ENCODE measurements at regions of chr3 and their contacts with region 1.

Region 1: GRCh38 chr3:160956806-160957205 is 148.3 kb downstream of the B3GALNT1 start:
- DNase-seq: peak; percentile 50
- H3K4me3 ChIP-seq: no peak overlapping the region
- H3K27ac ChIP-seq: no peak overlapping the region
- H3K4me1 ChIP-seq: no peaks in the 10 kb centered on the region
- H3K27me3 ChIP-seq: no peaks in the 10 kb centered on the region
- CTCF ChIP-seq: peak; percentile 25 to 35
- POLR2A ChIP-seq: no peak

Region 2: DNA sequence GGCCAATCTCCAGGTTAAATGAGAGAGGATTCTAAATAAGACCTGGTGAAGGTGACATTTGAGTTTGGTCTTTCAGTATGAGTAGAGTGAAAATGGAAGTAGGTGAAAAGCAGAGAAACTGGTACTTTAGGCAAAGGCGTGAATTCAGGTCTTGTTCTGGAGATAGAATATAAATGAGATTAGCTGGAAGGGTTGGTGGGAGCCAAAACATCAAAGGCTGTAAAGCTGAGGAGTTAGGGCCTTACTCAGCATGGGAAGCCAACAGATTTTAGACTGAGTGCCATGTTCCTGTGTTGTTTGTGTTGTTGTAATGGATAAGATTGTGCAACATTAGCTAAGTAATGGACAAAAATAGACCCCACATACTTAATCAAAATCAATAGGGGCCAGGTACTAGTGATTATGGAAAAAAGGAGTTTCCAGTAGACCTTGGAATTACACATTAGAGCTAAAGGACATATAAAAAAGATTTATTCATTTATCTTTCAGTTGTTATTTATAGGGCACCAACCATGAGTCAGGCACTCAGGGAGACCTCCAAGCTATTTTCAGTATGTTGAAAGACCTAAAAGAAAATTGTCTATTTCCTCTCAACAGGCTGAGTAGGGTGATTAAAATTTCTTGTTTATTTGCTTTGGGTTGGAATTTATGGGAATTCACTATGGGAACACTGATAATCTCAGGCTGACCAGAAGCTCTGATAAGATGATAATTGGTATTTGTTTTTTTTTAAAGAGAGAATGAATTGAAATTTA is 259.0 kb before region 1 on chr3:
- CTCF ChIA-PET with region 1: no interaction called
- POLR2A ChIA-PET with region 1: no interaction called
- dilution Hi-C with region 1: no loop called
- intact Hi-C with region 1: no loop called
- DNase-seq: peak; percentile 63
- H3K4me3 ChIP-seq: no peak overlapping the region
- H3K27ac ChIP-seq: no peak overlapping the region
- H3K4me1 ChIP-seq: peaks cover 13% of the 10 kb centered on the region
- H3K27me3 ChIP-seq: no peaks in the 10 kb centered on the region
- CTCF ChIP-seq: no peak
- POLR2A ChIP-seq: no peak

Region 3: DNA sequence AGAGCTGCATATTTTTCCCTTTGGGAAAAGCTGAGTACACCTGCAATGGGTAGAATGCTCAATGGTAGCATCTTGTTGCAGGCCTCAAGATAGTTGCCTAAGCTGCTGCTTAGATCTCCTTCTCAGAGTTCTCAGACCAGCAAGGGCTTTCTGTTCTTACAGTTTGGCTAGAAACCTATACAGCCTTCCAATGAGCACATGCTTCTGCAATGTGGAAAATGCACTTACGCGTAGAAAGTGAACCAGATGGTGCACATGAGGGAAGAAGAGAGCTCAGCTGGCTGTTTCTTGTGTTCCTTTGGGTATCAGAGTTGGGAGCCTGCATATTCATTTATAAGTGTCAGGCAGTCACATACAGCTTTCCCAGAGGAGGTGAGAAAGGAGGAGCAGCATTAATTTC is 12.0 kb after region 1 on chr3:
- CTCF ChIA-PET with region 1: interaction called, 16 read pairs
- POLR2A ChIA-PET with region 1: no interaction called
- dilution Hi-C with region 1: no loop called
- intact Hi-C with region 1: no loop called
- DNase-seq: no peak
- H3K4me3 ChIP-seq: no peak overlapping the region
- H3K27ac ChIP-seq: no peak overlapping the region
- H3K4me1 ChIP-seq: peaks cover 10% of the 10 kb centered on the region
- H3K27me3 ChIP-seq: no peaks in the 10 kb centered on the region
- CTCF ChIP-seq: no peak
- POLR2A ChIP-seq: no peak

Region 4: DNA sequence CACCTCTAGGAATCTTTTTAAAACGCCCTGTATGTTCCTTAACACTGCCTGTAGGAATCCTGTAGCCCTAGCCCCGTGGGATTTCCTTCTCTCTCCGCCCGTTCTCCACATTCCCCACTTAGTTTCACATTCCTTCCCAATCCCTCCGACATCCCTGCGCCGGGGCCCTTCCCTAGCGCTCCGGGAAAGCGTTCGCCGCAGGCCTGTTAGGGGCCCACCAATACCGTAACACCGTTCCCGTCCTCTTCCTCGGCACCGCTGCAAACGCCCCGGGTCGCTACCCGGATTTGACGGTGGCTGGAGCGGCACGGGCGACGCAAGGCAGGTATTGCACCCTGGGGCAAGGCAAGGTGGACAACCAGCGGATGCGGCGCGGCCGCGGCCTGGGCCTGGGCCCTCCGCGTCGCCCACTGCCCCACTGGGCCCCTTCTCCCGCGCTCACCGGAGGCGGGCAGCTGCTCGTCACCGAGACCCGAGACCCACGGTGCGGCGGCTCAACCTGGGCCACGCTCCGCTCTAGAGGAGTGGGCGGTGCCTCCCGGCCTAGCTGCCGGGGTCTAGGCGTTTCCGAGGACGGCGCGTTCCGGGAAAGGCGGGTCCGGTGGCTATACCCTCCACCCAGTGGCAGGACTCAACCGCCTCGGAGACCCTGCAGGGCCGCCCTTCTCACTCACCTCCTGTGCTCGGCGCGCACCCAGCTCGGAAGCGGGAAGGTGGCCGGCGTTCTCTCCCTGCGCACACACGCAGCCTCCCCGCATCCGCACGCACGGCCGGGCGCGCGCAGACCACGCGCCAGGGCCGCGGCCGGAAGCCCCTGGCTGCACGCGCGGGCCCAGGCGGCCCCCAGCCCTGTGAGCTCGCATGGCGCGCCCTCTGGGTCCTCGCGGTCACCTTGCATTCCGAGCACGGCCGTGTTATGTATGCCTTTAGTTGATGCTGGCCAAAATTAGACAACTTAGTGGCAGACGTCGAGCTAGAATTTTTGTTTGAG is 148.1 kb after region 1 on chr3 and contains the start of gene B3GALNT1:
- CTCF ChIA-PET with region 1: interaction called, 11 read pairs
- POLR2A ChIA-PET with region 1: no interaction called
- dilution Hi-C with region 1: no loop called
- intact Hi-C with region 1: loop called (anchors 5 kb)
- DNase-seq: peak; percentile 69
- H3K4me3 ChIP-seq: peak within 1 kb of the TSS; percentile 27 to 84 (median 52)
- H3K27ac ChIP-seq: peak within 1 kb of the TSS; percentile 26
- H3K4me1 ChIP-seq: peaks cover 3% of the 10 kb centered on the region
- H3K27me3 ChIP-seq: no peaks in the 10 kb centered on the region
- CTCF ChIP-seq: peak in 1 of 2 donors; percentile 0
- POLR2A ChIP-seq: no peak
- total RNA-seq, gene B3GALNT1: 13.7 and 29.4 TPM in 2 replicates

Region 5: DNA sequence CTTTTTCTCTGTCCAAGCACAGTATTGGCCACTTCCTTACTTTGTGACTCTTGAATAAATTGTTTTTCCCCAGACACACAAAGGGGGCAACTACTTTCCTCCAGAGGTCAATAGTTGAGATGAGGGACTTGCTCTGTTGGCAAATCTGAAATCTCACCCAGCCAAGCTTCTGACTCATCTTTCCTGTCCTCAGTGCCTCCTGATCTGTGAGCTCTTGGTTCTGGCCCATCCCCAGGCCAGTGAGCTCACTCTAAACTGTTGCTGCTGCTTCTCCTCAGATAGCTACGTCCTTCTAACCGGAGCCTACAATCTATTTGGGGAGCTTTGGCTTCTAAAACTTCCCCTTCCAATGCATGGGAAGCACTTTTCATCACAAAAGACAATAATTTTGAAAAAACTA is 214.3 kb after region 1 on chr3:
- CTCF ChIA-PET with region 1: interaction called, 25 read pairs
- POLR2A ChIA-PET with region 1: no interaction called
- dilution Hi-C with region 1: no loop called
- intact Hi-C with region 1: loop called (anchors 2 kb)
- DNase-seq: peak; percentile 84
- H3K4me3 ChIP-seq: no peak overlapping the region
- H3K27ac ChIP-seq: no peak overlapping the region
- H3K4me1 ChIP-seq: peaks cover 25% of the 10 kb centered on the region
- H3K27me3 ChIP-seq: no peaks in the 10 kb centered on the region
- CTCF ChIP-seq: no peak
- POLR2A ChIP-seq: peak; percentile 21

Region 6: DNA sequence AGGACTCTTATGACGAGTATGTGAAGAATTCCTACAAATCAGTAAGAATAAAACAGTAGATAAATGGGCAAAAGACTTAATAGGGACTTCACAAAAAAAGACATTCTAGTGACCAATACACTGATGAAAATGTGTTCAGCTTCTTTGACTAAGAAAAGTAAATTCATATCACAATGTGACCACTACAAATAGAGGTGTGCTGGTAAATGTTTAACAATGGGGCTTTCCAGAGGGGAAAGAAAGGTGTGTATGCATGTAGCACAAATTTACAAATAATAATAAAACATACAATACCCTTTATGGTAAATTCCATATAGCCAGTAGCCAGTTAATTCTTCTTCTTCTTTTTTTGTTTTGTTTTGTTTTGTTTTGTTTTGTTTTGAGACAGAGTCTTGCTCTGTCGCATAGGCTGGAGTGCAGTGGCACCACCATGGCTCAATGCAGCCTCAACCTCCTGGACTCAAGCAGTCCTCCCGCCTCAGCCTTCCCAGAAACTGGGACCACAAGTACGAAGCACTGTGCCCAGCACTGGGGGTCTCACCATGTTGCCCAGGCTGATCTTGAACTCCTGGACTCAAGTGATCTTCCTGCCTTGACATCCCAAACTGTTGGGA is 246.8 kb after region 1 on chr3:
- CTCF ChIA-PET with region 1: interaction called, 10 read pairs
- POLR2A ChIA-PET with region 1: no interaction called
- dilution Hi-C with region 1: no loop called
- intact Hi-C with region 1: loop called (anchors 5 kb)
- DNase-seq: no peak
- H3K4me3 ChIP-seq: no peak overlapping the region
- H3K27ac ChIP-seq: no peak overlapping the region
- H3K4me1 ChIP-seq: no peaks in the 10 kb centered on the region
- H3K27me3 ChIP-seq: no peaks in the 10 kb centered on the region
- CTCF ChIP-seq: no peak
- POLR2A ChIP-seq: no peak

Region 7: DNA sequence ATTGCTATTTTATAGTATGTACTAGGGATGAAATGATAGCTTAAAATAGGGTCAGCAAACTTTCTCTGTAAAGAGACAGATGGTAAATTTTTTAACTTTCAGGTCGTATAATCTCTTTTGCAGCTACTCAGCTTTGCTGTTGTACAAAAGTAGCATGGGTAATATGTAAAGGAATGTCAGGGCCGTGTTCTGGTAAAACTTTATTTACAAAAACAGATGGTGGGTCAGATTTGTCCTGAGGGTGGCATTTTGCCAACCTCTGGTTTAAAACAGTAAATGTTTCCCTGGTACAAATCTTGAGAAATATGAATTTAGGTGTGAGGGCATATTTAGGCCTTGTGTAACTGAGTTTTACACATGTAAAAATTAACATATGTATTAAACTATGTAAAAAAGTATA is 282.9 kb after region 1 on chr3:
- CTCF ChIA-PET with region 1: interaction called, 10 read pairs
- POLR2A ChIA-PET with region 1: no interaction called
- dilution Hi-C with region 1: no loop called
- intact Hi-C with region 1: no loop called
- DNase-seq: no peak
- H3K4me3 ChIP-seq: no peak overlapping the region
- H3K27ac ChIP-seq: no peak overlapping the region
- H3K4me1 ChIP-seq: no peaks in the 10 kb centered on the region
- H3K27me3 ChIP-seq: no peaks in the 10 kb centered on the region
- CTCF ChIP-seq: no peak
- POLR2A ChIP-seq: no peak